Endothelial cell of umbilical vein (primary cell): ENCODE measurements at regions of chr18 and their contacts with region 1.

Region 1: GRCh38 chr18:58223717-58224424 is 179.8 kb downstream of the NEDD4L start:
- DNase-seq: peak; percentile 98
- H3K4me3 ChIP-seq: peak overlapping the region in 1 of 3 experiments; percentile 94
- H3K27ac ChIP-seq: peak overlapping the region; percentile 98
- H3K4me1 ChIP-seq: peaks cover 48% of the 10 kb centered on the region
- H3K27me3 ChIP-seq: no peaks in the 10 kb centered on the region
- CTCF ChIP-seq: no peak
- POLR2A ChIP-seq: peak; percentile 56

Region 2: GRCh38 chr18:57819671-57820460 is 404.0 kb before region 1 on chr18:
- CTCF ChIA-PET with region 1: no interaction called
- POLR2A ChIA-PET with region 1: no interaction called
- dilution Hi-C with region 1: no loop called
- intact Hi-C with region 1: loop called (anchors 5 kb)
- DNase-seq: peak; percentile 99
- H3K4me3 ChIP-seq: no peak overlapping the region
- H3K27ac ChIP-seq: peak overlapping the region; percentile 96
- H3K4me1 ChIP-seq: peaks cover 18% of the 10 kb centered on the region
- H3K27me3 ChIP-seq: no peaks in the 10 kb centered on the region
- CTCF ChIP-seq: no peak
- POLR2A ChIP-seq: peak; percentile 43

Region 3: DNA sequence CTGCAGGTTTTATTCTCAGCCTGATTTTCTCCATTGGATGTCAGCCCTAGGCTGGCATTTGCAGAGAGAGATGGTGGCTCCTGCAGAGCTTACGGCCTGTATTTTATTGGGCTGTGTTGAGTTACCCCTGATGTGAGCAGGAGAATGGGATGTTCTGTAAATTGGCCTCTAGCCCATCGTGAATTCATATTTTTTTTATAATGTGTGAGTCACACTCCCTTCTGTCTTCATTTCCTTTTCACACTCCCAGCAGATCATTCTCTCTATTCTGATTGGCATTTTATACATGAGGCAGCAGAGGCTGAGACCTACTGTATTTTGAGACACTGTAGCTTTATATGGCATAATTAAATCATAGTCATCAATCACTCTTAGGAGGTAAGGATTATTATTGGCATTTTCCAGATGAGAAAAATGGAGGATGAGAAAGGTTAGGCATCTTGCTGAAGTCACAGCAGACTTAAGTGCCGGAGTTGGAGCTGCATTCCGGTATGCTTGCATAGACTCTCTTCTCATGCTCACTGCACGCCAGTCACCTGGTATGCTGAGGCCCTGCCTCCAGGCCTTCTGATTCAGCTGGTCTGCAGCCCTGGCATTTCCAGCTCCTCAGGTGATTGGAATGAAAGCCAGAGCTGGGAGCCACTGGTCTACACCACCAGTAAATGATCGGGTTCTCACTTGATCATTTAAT is 37.5 kb before region 1 on chr18:
- CTCF ChIA-PET with region 1: interaction called, 12 read pairs
- POLR2A ChIA-PET with region 1: no interaction called
- dilution Hi-C with region 1: no loop called
- intact Hi-C with region 1: loop called (anchors 2 kb)
- DNase-seq: peak; percentile 85
- H3K4me3 ChIP-seq: no peak overlapping the region
- H3K27ac ChIP-seq: peak overlapping the region; percentile 27
- H3K4me1 ChIP-seq: peaks cover 23% of the 10 kb centered on the region
- H3K27me3 ChIP-seq: no peaks in the 10 kb centered on the region
- CTCF ChIP-seq: no peak
- POLR2A ChIP-seq: no peak

Region 4: GRCh38 chr18:58239879-58240278 is 16.0 kb after region 1 on chr18:
- CTCF ChIA-PET with region 1: interaction called, 5 read pairs
- POLR2A ChIA-PET with region 1: no interaction called
- dilution Hi-C with region 1: no loop called
- intact Hi-C with region 1: loop called (anchors 1 kb)
- DNase-seq: peak; percentile 42
- H3K4me3 ChIP-seq: no peak overlapping the region
- H3K27ac ChIP-seq: peak overlapping the region; percentile 71
- H3K4me1 ChIP-seq: peaks cover 27% of the 10 kb centered on the region
- H3K27me3 ChIP-seq: no peaks in the 10 kb centered on the region
- CTCF ChIP-seq: no peak
- POLR2A ChIP-seq: no peak

Region 5: DNA sequence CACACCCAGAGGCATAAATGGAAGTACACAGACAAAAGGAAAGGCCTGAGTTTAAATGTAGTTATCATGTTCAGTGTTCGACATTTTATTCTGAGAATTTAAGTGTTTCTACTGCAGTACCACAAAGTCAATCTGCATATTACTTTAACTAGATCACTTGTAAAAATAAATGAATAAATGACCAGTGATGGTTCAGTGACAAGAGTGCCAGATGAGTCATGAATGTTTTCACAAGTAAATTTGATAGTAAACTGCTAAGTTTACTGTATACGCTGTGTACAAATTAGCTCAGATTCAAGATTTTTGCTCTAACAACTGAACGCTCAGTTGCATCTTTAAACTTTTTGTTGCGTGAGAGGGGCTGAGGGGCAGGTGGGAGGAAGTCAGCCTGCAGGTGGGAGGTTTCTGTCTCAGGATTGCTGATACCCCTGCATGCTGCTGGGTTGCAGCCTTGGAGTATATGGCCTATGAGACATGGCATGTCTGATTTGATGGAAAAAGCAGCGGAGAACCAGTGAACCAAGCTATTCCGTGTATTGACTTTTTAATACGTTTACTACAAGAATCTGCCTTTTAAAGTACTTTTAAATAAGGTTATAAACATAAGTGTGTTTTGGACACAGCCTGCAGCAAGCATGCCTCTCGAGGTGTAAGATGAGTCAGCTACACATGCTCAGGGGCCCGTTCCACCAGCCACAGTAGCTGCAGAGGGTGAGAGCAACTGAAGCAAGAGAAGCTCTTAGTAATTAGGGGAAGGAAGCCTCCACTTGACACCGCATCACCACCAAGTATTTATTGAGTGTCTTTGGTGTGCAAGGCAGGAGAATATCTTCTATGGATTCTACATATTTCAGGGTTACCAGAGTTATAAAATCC is 65.3 kb after region 1 on chr18:
- CTCF ChIA-PET with region 1: interaction called, 8 read pairs
- POLR2A ChIA-PET with region 1: no interaction called
- dilution Hi-C with region 1: no loop called
- intact Hi-C with region 1: loop called (anchors 1 kb)
- DNase-seq: peak; percentile 68
- H3K4me3 ChIP-seq: no peak overlapping the region
- H3K27ac ChIP-seq: peak overlapping the region; percentile 99
- H3K4me1 ChIP-seq: peaks cover 44% of the 10 kb centered on the region
- H3K27me3 ChIP-seq: no peaks in the 10 kb centered on the region
- CTCF ChIP-seq: no peak
- POLR2A ChIP-seq: no peak